ENCODE measurements at regions of chr17 and their contacts with region 1.

Region 1: GRCh38 chr17:77869665-77870132 is 88.8 kb upstream of the TNRC6C start:
- DNase-seq: no peak
- H3K4me3 ChIP-seq: no peak overlapping the region
- H3K27ac ChIP-seq: no peak overlapping the region
- H3K4me1 ChIP-seq: peaks cover 6% of the 10 kb centered on the region
- H3K27me3 ChIP-seq: no peaks in the 10 kb centered on the region
- CTCF ChIP-seq: no peak
- EP300 ChIP-seq: no peak
- POLR2A ChIP-seq: no peak

Region 2: GRCh38 chr17:77590951-77591735 is 278.6 kb before region 1 on chr17:
- intact Hi-C with region 1: loop called in 1 of 4 experiments (anchors 10 kb)
- DNase-seq: no peak
- H3K4me3 ChIP-seq: no peak overlapping the region
- H3K27ac ChIP-seq: no peak overlapping the region
- H3K4me1 ChIP-seq: no peaks in the 10 kb centered on the region
- H3K27me3 ChIP-seq: no peaks in the 10 kb centered on the region
- CTCF ChIP-seq: no peak
- EP300 ChIP-seq: no peak
- POLR2A ChIP-seq: no peak

Region 3: GRCh38 chr17:77957857-77958715 is 88.4 kb after region 1 on chr17 and contains the start of gene TNRC6C:
- intact Hi-C with region 1: no loop called
- DNase-seq: peak; percentile 100
- H3K4me3 ChIP-seq: peak within 1 kb of the TSS; percentile 68
- H3K27ac ChIP-seq: peak within 1 kb of the TSS; percentile 79
- H3K4me1 ChIP-seq: peaks cover 9% of the 10 kb centered on the region
- H3K27me3 ChIP-seq: no peaks in the 10 kb centered on the region
- CTCF ChIP-seq: peak in 2 of 3 donors; percentile 30 to 49
- EP300 ChIP-seq: peak; percentile 74
- POLR2A ChIP-seq: peak; percentile 100
- total RNA-seq, gene TNRC6C: 9.2 to 45.3 (median 32.5) TPM

Region 4: GRCh38 chr17:78186692-78187595 is 317.2 kb after region 1 on chr17 and contains the starts of genes AFMID and TK1:
- intact Hi-C with region 1: no loop called
- DNase-seq: peak; percentile 97 to 100 (median 98)
- H3K4me3 ChIP-seq: peak within 1 kb of the TSS; percentile 38
- H3K27ac ChIP-seq: peak within 1 kb of the TSS; percentile 11 to 40
- H3K4me1 ChIP-seq: peaks cover 7% of the 10 kb centered on the region
- H3K27me3 ChIP-seq: no peaks in the 10 kb centered on the region
- CTCF ChIP-seq: peak; percentile 94 to 96 (median 96)
- EP300 ChIP-seq: no peak
- POLR2A ChIP-seq: peak; percentile 38
- total RNA-seq, gene AFMID: 32.4 to 69.5 (median 38.5) TPM
- total RNA-seq, gene TK1: 0.35 to 4.9 (median 1.4) TPM

Measured in ovary (tissue), 10 donors.